AG04450 (cell line): ENCODE measurements at regions of chr22 and their contacts with region 1.

Region 1: DNA sequence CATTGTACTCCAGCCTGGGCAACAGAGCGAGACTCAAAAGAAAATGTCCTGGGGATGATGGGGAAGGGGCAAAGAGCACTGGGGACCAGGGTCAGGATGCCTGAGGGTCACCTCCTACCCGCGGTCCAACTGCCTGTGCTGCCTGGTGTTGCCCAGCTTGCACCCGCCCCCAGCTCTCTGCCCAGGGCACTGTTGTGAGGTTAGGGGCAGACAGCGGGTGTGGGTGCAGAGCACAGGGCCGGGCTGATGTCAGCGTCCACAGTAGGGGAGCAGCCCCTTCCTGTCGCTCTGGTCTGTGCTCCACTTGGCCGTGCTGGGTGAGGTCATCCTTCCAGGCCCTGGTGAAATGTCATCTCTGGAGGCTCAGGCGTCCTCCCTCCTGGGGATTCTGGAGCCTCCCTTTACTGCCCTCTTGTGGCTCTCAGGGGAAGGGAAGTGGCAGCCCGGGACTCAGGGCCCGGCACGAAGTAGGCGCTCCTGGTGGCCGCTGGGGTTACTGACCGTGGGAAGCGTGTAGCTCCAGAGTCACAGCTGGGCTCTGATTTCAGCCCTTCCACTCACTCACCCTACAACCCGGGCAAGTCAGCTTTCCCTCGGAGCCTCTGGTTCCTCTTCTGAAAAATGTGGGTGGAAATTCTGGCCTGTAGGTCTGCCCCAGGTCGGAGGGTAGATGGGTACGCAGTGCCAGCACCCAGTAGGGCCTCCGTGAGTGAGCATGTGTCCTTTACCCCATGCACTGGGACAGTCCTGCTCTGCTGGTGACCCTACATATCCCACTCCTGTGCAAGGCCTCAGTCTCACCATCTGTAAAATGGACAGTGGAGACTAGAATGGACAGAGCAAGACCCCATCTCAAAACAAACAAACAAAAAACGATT is 17.3 kb upstream of the PRR5 start:
- DNase-seq: peak; percentile 83
- H3K4me3 ChIP-seq: no peak overlapping the region
- H3K27ac ChIP-seq: peak overlapping the region; percentile 70
- H3K27me3 ChIP-seq: no peaks in the 10 kb centered on the region
- CTCF ChIP-seq: peak; percentile 100

Region 2: DNA sequence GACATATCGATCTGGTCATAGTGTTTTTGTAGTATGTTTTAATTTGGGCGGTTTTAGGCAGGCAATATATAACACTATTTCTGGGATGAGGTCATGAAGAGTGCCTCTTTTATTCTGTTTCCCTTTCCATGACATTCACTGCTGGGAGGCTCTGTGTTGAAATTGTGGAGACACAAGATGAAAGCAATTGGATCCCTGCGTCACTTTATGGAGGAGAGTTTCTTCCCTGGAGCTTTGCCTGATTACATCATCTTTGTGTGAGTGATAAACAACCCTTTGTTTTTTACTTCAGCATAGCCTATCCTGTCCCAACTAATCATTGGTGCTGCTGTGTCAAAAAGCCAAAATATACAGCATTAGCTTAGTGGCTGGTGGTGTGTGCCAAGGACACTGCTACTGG is 455.4 kb before region 1 on chr22:
- CTCF ChIA-PET with region 1: no interaction called
- POLR2A ChIA-PET with region 1: no interaction called
- DNase-seq: no peak
- H3K4me3 ChIP-seq: no peak overlapping the region
- H3K27ac ChIP-seq: no peak overlapping the region
- H3K27me3 ChIP-seq: peaks cover 8% of the 10 kb centered on the region
- CTCF ChIP-seq: no peak

Region 3: DNA sequence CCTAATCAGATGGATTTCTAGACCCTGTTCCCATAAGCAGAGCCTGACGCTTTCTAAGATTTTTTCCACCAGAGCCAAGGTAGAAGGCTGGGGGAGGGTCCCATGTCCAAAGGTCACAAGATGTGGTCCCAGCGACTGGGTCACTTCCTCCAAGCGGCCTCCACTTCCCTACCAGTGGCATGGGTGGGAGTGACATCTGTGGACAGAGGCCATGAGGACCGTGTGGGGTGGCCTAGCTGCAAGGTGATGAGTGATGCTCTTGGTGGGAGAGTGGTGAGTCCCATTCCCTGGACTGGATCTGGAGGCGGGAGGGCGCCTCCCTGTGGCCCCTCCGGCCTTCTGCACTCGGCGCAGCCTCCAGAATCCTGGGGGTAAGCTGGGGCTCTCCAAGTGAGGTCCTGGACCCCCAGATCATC is 15.2 kb before region 1 on chr22:
- CTCF ChIA-PET with region 1: interaction called, 28 read pairs
- POLR2A ChIA-PET with region 1: no interaction called
- DNase-seq: no peak
- H3K4me3 ChIP-seq: peak overlapping the region; percentile 68
- H3K27ac ChIP-seq: no peak overlapping the region
- H3K27me3 ChIP-seq: peaks cover 3% of the 10 kb centered on the region
- CTCF ChIP-seq: peak; percentile 59

Region 4: GRCh38 chr22:44697423-44698141 is 12.8 kb after region 1 on chr22:
- CTCF ChIA-PET with region 1: interaction called, 16 read pairs
- POLR2A ChIA-PET with region 1: interaction called, 4 read pairs
- DNase-seq: peak; percentile 27
- H3K4me3 ChIP-seq: no peak overlapping the region
- H3K27ac ChIP-seq: peak overlapping the region; percentile 94
- H3K27me3 ChIP-seq: no peaks in the 10 kb centered on the region
- CTCF ChIP-seq: peak; percentile 93